Motor neuron (in vitro differentiated cells): ENCODE measurements at regions of chr12 and their contacts with region 1.

Region 1: DNA sequence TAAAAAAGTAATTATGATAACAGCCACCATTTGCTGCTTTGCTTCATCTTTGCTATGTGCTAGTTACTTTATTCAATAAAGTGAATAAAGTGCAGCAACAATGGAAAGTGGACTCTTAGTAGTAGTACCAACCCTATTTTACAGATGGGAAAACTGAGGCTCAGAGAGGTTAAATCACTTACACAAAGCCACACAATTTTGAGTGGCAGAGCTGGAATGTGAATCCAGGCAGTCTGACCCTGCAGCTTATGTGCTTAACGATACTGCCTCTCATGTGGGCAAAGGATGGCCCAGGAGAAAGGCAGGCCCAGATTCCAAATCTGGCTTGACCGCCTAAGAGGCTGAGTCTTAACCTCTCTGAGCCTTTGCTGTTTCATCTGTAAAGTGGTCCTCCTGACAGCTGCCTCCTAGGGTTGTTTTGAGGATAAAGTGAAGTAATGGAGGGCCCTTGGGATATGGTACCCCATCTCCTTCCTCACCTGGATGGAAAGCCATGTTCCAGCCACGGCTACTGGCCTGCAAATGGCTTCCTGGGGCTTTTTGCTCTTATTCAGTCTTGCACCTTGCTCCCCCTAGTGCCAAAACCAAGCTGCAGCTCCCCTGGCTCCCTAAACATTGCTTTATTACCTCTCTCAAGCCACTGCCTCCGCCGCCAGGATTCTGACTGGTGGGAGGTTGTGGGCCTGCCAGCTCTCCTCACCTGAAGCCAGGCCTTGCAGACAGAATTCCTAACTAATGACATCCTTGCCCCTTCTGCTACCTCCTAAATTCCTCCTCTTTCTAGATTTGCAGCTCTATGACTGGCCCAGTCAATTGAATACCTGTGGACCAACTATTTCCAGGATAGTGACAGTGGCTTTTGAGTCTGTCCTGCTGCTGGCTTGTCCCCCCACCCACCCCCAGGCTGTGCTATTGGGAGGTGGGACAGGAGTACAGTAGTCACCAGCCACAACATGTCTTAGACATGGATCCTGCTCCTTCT is 283.3 kb upstream of the PWP1 start:
- ATAC-seq: peak in 4 of 8 experiments; percentile 31 to 86 (median 78)
- H3K4me3 ChIP-seq: no peak overlapping the region
- H3K27ac ChIP-seq: no peak overlapping the region
- H3K4me1 ChIP-seq: peaks cover 0 to 20% of the 10 kb centered on the region in 2 donors

Region 2: GRCh38 chr12:107126796-107127481 is 275.4 kb before region 1 on chr12:
- in situ Hi-C with region 1: loop called in 2 of 9 experiments (anchors 5 to 25 kb)
- ATAC-seq: peak; percentile 14 to 79 (median 57)
- H3K4me3 ChIP-seq: no peak overlapping the region
- H3K27ac ChIP-seq: no peak overlapping the region
- H3K4me1 ChIP-seq: peaks cover 10 to 51% of the 10 kb centered on the region in 2 donors

Region 3: DNA sequence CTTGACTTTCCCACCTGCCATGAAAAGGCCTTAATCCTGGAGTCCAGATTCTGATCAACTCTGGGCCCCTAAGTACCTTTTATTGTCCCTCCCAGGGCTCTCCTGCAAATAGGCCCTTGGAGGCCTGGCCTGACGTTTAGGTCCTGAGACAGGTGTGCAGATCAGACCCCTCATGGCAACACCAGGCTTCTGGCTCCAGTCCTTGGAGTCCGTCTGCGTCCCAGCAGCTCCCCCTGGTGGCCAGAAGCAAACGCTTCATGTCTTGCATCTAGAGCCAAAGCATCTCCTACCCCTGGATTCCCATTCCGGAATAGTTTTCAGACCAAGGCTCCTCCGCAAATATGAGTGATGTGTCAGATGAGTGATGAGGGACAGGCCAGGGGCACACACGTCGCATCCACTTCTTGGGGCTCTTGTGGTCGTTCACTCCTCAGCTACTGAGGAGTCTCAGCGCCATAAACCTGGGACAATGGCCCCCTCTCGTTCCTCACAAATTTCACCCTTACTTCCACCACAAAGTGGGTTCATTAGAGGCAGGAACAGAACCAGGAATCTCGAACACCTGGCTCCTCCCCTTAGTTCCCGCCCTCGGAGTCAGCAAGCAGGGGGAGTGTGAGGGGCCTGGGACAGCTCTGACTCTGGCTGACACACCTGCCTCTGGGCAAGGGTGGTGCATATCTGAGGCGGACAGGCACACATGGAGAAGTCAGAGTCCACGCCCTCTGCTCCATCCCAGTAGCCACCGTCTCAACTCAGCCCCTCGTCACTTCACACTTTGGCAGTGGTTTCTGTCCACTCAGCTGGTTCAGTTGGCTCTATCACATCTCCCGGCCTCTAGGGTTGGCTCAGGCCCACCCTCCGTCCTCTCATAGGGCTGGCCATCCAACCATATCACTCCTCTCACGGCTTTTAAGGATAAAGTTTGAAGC is 205.4 kb after region 1 on chr12:
- in situ Hi-C with region 1: loop called in 1 of 9 experiments (anchors 25 kb)
- ATAC-seq: peak; percentile 79 to 96 (median 85)
- H3K4me3 ChIP-seq: no peak overlapping the region
- H3K27ac ChIP-seq: no peak overlapping the region
- H3K4me1 ChIP-seq: peaks cover 12 to 18% of the 10 kb centered on the region in 2 donors